Endothelial cell of umbilical vein (primary cell): ENCODE measurements at regions of chr20 and their contacts with region 1.

Region 1: GRCh38 chr20:34010405-34010931 is 16.8 kb downstream of the RALY start:
- DNase-seq: no peak
- H3K4me3 ChIP-seq: no peak overlapping the region
- H3K27ac ChIP-seq: no peak overlapping the region
- H3K4me1 ChIP-seq: peaks cover 3% of the 10 kb centered on the region
- H3K27me3 ChIP-seq: no peaks in the 10 kb centered on the region
- CTCF ChIP-seq: no peak
- POLR2A ChIP-seq: no peak

Region 2: GRCh38 chr20:34022154-34022838 is 11.8 kb after region 1 on chr20:
- CTCF ChIA-PET with region 1: interaction called, 11 read pairs
- POLR2A ChIA-PET with region 1: no interaction called
- dilution Hi-C with region 1: no loop called
- intact Hi-C with region 1: no loop called
- DNase-seq: peak; percentile 35
- H3K4me3 ChIP-seq: no peak overlapping the region
- H3K27ac ChIP-seq: no peak overlapping the region
- H3K4me1 ChIP-seq: no peaks in the 10 kb centered on the region
- H3K27me3 ChIP-seq: no peaks in the 10 kb centered on the region
- CTCF ChIP-seq: peak; percentile 17 to 33
- POLR2A ChIP-seq: no peak

Region 3: DNA sequence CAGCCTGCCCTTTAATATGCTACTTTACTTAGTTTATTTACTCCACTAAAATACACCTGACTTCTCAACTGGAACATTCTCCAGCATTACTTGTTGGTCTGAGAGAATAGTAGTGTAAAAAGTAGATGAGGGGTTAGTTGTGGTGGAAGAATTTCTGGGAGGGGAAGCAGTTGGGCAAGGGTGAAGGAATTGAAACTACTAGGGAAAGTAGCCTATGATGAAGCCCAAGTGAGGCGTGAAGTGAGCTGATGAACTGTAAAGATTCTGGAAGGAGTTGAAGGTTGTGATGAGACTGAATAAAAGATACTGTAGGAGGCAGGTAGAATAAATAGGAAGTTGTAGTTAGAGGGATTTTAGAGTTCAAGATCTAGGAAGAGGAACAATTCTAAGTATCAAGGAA is 425.1 kb after region 1 on chr20:
- CTCF ChIA-PET with region 1: no interaction called
- POLR2A ChIA-PET with region 1: no interaction called
- dilution Hi-C with region 1: no loop called
- intact Hi-C with region 1: no loop called
- DNase-seq: no peak
- H3K4me3 ChIP-seq: no peak overlapping the region
- H3K27ac ChIP-seq: no peak overlapping the region
- H3K4me1 ChIP-seq: peaks cover 15% of the 10 kb centered on the region
- H3K27me3 ChIP-seq: no peaks in the 10 kb centered on the region
- CTCF ChIP-seq: no peak
- POLR2A ChIP-seq: no peak